Ascending aorta (tissue), 2 donors: ENCODE measurements at regions of chr9 and their contacts with region 1.

Region 1: GRCh38 chr9:130461218-130461630 is 16.5 kb downstream of the ASS1 start:
- DNase-seq: no peak
- H3K4me3 ChIP-seq: no peak overlapping the region
- H3K27ac ChIP-seq: no peak overlapping the region
- H3K4me1 ChIP-seq: no peaks in the 10 kb centered on the region
- H3K27me3 ChIP-seq: no peaks in the 10 kb centered on the region
- CTCF ChIP-seq: peak; percentile 84 to 96 (median 86)

Region 2: GRCh38 chr9:130682490-130683121 is 221.4 kb after region 1 on chr9:
- intact Hi-C with region 1: loop called (anchors 1 kb)
- DNase-seq: peak in 1 of 2 donors; percentile 86
- H3K4me3 ChIP-seq: peak overlapping the region; percentile 60 to 77
- H3K27ac ChIP-seq: no peak overlapping the region
- H3K4me1 ChIP-seq: peaks cover 2 to 11% of the 10 kb centered on the region in 2 donors
- H3K27me3 ChIP-seq: no peaks in the 10 kb centered on the region
- CTCF ChIP-seq: peak; percentile 76 to 83 (median 79)

Region 3: GRCh38 chr9:130946778-130947617 is 485.8 kb after region 1 on chr9:
- intact Hi-C with region 1: no loop called
- DNase-seq: no peak
- H3K4me3 ChIP-seq: no peak overlapping the region
- H3K27ac ChIP-seq: no peak overlapping the region
- H3K4me1 ChIP-seq: no peaks in the 10 kb centered on the region
- H3K27me3 ChIP-seq: peaks cover 1% of the 10 kb centered on the region
- CTCF ChIP-seq: no peak